Mammary epithelial cell (primary cell): ENCODE measurements at regions of chr5 and their contacts with region 1.

Region 1: GRCh38 chr5:95858661-95859326 is 36.3 kb upstream of the GLRX start:
- DNase-seq: peak; percentile 97
- H3K4me3 ChIP-seq: peak overlapping the region; percentile 10 to 48 (median 31)
- H3K27ac ChIP-seq: peak overlapping the region; percentile 93
- H3K4me1 ChIP-seq: peaks cover 23% of the 10 kb centered on the region
- H3K27me3 ChIP-seq: no peaks in the 10 kb centered on the region
- CTCF ChIP-seq: peak; percentile 93 to 99

Region 2: DNA sequence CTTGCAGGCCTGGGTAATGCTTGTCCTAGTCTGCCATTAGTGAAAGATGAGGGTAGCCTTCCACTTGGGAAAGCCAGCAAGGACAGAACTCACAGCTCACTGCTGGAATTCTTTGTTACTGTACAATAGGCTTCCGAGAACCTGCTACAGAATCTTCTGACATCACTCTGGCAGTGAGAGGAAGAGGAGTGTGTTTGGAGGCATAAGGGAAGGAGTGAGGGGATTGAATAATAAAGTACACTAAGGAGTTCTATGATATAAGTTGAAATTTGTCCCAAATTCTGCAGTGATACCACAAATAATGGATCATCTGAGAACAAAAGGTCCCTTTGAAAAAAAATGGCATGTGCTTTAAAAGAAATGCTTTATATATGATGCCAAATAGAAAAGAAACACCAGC is 175.9 kb before region 1 on chr5 and contains the start of gene SPATA9:
- CTCF ChIA-PET with region 1: no interaction called
- dilution Hi-C with region 1: no loop called
- in situ Hi-C with region 1: no loop called
- intact Hi-C with region 1: no loop called
- DNase-seq: no peak
- H3K4me3 ChIP-seq: no peak within 1 kb of the TSS
- H3K27ac ChIP-seq: no peak within 1 kb of the TSS
- H3K4me1 ChIP-seq: no peaks in the 10 kb centered on the region
- H3K27me3 ChIP-seq: peaks cover 11% of the 10 kb centered on the region
- CTCF ChIP-seq: no peak
- total RNA-seq, gene SPATA9: not detected

Region 3: GRCh38 chr5:95915999-95916686 is 57.3 kb after region 1 on chr5:
- CTCF ChIA-PET with region 1: no interaction called
- dilution Hi-C with region 1: no loop called
- in situ Hi-C with region 1: no loop called
- intact Hi-C with region 1: no loop called
- DNase-seq: no peak
- H3K4me3 ChIP-seq: no peak overlapping the region
- H3K27ac ChIP-seq: no peak overlapping the region
- H3K4me1 ChIP-seq: peaks cover 10% of the 10 kb centered on the region
- H3K27me3 ChIP-seq: no peaks in the 10 kb centered on the region
- CTCF ChIP-seq: no peak

Region 4: GRCh38 chr5:95934207-95934804 is 75.5 kb after region 1 on chr5:
- CTCF ChIA-PET with region 1: no interaction called
- dilution Hi-C with region 1: no loop called
- in situ Hi-C with region 1: no loop called
- intact Hi-C with region 1: no loop called
- DNase-seq: no peak
- H3K4me3 ChIP-seq: no peak overlapping the region
- H3K27ac ChIP-seq: no peak overlapping the region
- H3K4me1 ChIP-seq: peaks cover 7% of the 10 kb centered on the region
- H3K27me3 ChIP-seq: no peaks in the 10 kb centered on the region
- CTCF ChIP-seq: no peak

Region 5: DNA sequence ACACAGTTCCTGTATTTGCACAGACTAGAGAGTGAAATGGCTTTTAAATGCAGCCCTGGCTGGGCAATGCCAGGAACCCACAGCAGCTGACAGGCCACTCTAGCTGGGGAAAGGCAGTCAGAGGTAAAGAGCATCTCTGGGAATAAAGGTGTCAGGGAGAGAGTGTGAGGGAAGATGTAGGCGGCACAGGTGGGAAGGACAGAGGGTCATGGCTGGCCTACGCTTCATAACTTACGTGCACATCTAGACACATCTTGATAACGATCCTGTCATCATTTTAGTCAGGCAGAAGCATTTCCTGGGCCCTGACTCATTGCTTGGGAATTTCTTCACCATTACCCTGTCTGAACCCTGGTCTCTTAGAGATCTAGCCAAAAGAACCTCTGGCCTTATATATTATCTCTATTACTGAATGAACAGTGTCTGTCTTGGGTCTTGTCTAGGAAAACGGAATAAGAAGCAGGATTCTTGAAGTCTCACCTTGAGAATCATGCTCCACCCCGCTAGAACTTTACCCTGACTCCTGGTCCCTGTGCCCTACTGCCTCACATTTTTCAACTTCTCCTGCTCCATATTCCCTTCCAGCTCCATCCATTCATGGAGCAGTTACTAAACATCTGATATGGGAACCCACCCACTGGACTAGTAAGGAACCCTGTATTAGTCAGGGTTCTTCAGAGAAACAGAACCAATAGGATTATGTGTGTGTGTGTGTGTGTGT is 209.3 kb after region 1 on chr5:
- CTCF ChIA-PET with region 1: no interaction called
- dilution Hi-C with region 1: no loop called
- in situ Hi-C with region 1: no loop called
- intact Hi-C with region 1: loop called (anchors 5 kb)
- DNase-seq: peak; percentile 94
- H3K4me3 ChIP-seq: no peak overlapping the region
- H3K27ac ChIP-seq: peak overlapping the region; percentile 89
- H3K4me1 ChIP-seq: peaks cover 46% of the 10 kb centered on the region
- H3K27me3 ChIP-seq: no peaks in the 10 kb centered on the region
- CTCF ChIP-seq: no peak

Region 6: GRCh38 chr5:96177303-96177869 is 318.6 kb after region 1 on chr5:
- CTCF ChIA-PET with region 1: no interaction called
- dilution Hi-C with region 1: no loop called
- in situ Hi-C with region 1: no loop called
- intact Hi-C with region 1: loop called (anchors 5 kb)
- DNase-seq: peak; percentile 99
- H3K4me3 ChIP-seq: no peak overlapping the region
- H3K27ac ChIP-seq: peak overlapping the region; percentile 50
- H3K4me1 ChIP-seq: peaks cover 40% of the 10 kb centered on the region
- H3K27me3 ChIP-seq: no peaks in the 10 kb centered on the region
- CTCF ChIP-seq: no peak

Region 7: GRCh38 chr5:96226941-96227552 is 368.3 kb after region 1 on chr5:
- CTCF ChIA-PET with region 1: no interaction called
- dilution Hi-C with region 1: no loop called
- in situ Hi-C with region 1: no loop called
- intact Hi-C with region 1: loop called (anchors 2 kb)
- DNase-seq: peak; percentile 89
- H3K4me3 ChIP-seq: peak overlapping the region in 1 of 3 experiments; percentile 5
- H3K27ac ChIP-seq: peak overlapping the region; percentile 96
- H3K4me1 ChIP-seq: peaks cover 30% of the 10 kb centered on the region
- H3K27me3 ChIP-seq: no peaks in the 10 kb centered on the region
- CTCF ChIP-seq: no peak

Region 8: GRCh38 chr5:96434201-96434645 is 575.4 kb after region 1 on chr5:
- CTCF ChIA-PET with region 1: no interaction called
- dilution Hi-C with region 1: no loop called
- in situ Hi-C with region 1: no loop called
- intact Hi-C with region 1: loop called (anchors 10 kb)
- DNase-seq: peak; percentile 51
- H3K4me3 ChIP-seq: no peak overlapping the region
- H3K27ac ChIP-seq: no peak overlapping the region
- H3K4me1 ChIP-seq: peaks cover 3% of the 10 kb centered on the region
- H3K27me3 ChIP-seq: peaks cover 30% of the 10 kb centered on the region
- CTCF ChIP-seq: no peak

Region 9: DNA sequence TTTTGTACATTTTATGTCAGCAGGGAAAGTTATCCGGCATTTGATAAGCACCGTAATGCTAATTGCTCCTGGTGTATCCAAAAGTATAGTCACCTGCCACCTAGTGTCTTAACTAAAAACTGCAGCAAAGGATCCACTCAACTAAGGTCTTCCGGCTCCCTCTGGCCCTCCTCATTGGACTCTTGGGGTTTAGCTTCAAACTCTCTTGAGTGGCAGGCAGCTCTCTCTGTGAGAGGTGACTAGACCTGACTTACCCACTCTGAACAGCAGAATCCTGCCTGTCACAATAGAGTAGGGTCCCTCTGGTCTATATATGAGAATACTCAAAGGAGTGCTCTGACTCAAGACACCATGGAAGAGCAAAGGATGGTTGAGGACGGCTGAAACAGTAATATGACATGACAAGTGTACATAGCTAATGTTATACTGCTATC is 743.0 kb after region 1 on chr5:
- CTCF ChIA-PET with region 1: no interaction called
- dilution Hi-C with region 1: no loop called
- in situ Hi-C with region 1: loop called (anchors 10 to 25 kb)
- intact Hi-C with region 1: loop called (anchors 1 kb)
- DNase-seq: peak; percentile 55
- H3K4me3 ChIP-seq: no peak overlapping the region
- H3K27ac ChIP-seq: no peak overlapping the region
- H3K4me1 ChIP-seq: no peaks in the 10 kb centered on the region
- H3K27me3 ChIP-seq: peaks cover 5% of the 10 kb centered on the region
- CTCF ChIP-seq: peak; percentile 77 to 87